Activated naive CD4-positive, alpha-beta T cell treated with anti-CD3 and anti-CD28 coated beads for 36 hours (primary cell): ENCODE measurements at regions of chr5 and their contacts with region 1.

Region 1: GRCh38 chr5:83889971-83890745 is 169.5 kb upstream of the HAPLN1 start:
- DNase-seq: no peak
- H3K4me3 Mint-ChIP-seq: no peak overlapping the region
- H3K27ac Mint-ChIP-seq: no peak overlapping the region
- H3K4me1 Mint-ChIP-seq: no peaks in the 10 kb centered on the region
- H3K27me3 Mint-ChIP-seq: no peaks in the 10 kb centered on the region

Region 2: DNA sequence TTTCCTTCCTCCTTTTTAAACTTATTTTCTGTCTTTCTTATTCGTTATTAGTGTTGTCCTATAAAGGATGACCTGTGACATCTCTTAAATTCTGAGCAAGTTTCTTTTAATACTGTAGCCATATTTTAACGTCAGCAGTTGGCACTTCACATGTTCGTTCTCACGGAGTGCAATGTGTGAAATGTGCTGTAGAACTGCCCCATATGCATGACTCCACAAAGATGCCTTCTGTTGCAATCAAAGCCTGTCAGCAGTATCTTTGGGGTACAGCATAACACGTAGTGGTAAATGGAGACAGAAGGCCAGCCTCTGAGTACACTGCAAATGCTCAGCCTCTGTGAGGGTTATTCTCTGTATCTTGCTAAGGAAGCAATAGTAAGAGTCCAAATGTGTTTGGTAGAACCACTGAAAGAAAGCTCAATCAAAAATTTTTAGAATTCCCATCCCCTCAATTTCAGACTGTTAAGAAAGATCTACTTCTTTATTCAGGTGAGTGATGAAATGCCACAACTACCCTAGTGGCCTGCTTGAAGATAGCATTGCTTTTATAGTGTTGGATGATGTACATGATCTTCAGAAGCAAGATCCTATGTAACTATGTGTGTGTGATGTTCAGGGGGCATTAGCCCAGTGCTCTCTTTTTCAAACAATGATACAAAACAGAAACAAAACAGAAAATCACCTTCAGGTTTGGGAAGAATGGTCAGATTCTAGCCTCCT is 1090.6 kb before region 1 on chr5:
- CTCF ChIA-PET with region 1: no interaction called
- intact Hi-C with region 1: loop called (anchors 5 kb)
- DNase-seq: no peak
- H3K4me3 Mint-ChIP-seq: no peak overlapping the region
- H3K27ac Mint-ChIP-seq: no peak overlapping the region
- H3K4me1 Mint-ChIP-seq: no peaks in the 10 kb centered on the region
- H3K27me3 Mint-ChIP-seq: peaks cover 3% of the 10 kb centered on the region

Region 3: DNA sequence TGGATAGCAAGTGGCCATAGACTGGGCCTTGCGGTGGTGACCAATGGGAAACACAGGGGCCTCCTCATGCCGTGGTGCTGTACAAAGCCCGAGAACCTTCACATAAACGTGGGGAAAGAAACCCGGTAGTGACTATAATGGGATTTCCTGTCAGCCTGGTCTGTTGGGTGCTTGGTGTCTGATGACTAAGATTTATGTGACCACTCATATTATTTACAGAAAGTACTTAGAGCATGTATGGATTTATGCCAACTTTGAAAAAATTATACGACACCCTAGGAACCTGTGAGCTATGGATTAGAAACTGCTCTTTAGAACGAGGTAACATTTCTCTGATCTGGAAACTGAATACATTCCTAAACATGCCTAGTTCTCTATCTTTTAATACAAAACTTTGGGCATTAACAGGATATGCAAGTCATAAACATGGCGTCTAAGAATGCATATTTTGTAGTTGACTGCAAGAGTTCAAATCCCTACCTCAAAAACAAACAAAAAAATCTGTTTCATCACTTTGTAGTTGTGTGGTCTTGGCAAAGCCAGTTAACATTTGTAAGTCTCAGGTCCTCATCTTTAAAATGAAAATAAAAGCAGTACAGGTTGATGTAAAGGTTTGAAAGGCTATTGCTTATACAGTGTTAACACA is 898.4 kb before region 1 on chr5:
- CTCF ChIA-PET with region 1: no interaction called
- intact Hi-C with region 1: no loop called
- DNase-seq: no peak
- H3K4me3 Mint-ChIP-seq: no peak overlapping the region
- H3K27ac Mint-ChIP-seq: no peak overlapping the region
- H3K4me1 Mint-ChIP-seq: no peaks in the 10 kb centered on the region
- H3K27me3 Mint-ChIP-seq: no peaks in the 10 kb centered on the region